OCI-LY7 (cell line): ENCODE measurements at regions of chr14 and their contacts with region 1.

Region 1: GRCh38 chr14:59313144-59313651 is 124.7 kb downstream of the DAAM1 start:
- DNase-seq: no peak
- H3K4me3 ChIP-seq: no peak overlapping the region
- H3K27ac ChIP-seq: no peak overlapping the region
- H3K4me1 ChIP-seq: peaks cover 69% of the 10 kb centered on the region
- CTCF ChIP-seq: no peak

Region 2: DNA sequence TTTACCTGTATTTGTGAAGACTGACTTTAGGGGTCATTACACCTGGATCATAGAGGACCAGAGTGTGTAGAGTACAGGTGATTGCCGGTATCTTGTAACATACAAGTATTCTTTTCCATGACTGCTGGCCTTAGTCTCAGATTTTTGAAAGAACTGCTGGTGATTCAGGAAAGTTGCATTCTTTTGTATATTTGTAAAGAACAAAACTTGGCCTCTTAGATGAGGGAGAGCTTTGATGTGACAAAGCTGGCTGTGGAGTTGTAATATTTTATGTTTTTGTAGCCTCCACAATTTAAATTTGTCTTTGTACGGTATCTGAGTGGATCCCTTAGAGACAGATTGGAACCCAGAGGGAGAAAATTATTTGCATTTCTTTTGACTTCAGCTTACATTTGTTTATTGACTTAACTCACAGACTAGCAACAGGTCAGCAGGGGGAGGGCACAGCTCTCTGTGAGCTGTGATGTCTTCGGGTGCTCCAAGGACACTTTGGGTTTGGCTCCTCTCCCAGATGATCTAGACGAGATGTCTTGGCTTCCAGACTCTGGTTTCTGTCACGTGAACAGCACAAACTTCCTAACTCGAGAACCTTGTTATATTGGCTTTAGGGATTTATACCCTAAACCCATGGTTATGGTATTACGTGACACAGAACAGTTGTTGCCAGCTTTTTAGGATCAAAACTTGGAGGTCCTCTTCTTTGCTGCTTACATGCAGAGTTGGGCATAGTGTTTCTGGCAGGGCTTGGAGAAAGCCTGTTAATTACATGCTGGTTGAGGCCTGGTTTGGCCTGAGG is 58.9 kb before region 1 on chr14:
- CTCF ChIA-PET with region 1: no interaction called
- POLR2A ChIA-PET with region 1: no interaction called
- intact Hi-C with region 1: no loop called
- DNase-seq: no peak
- H3K4me3 ChIP-seq: no peak overlapping the region
- H3K27ac ChIP-seq: no peak overlapping the region
- H3K4me1 ChIP-seq: peaks cover 37% of the 10 kb centered on the region
- CTCF ChIP-seq: no peak

Region 3: GRCh38 chr14:59301354-59301753 is 11.8 kb before region 1 on chr14:
- CTCF ChIA-PET with region 1: interaction called, 4 read pairs
- POLR2A ChIA-PET with region 1: interaction called, 41 read pairs
- intact Hi-C with region 1: no loop called
- DNase-seq: peak; percentile 96
- H3K4me3 ChIP-seq: peak overlapping the region; percentile 57
- H3K27ac ChIP-seq: peak overlapping the region; percentile 99
- H3K4me1 ChIP-seq: peaks cover 98% of the 10 kb centered on the region
- CTCF ChIP-seq: no peak